ENCODE measurements at regions of chr20 and their contacts with region 1.

Region 1: DNA sequence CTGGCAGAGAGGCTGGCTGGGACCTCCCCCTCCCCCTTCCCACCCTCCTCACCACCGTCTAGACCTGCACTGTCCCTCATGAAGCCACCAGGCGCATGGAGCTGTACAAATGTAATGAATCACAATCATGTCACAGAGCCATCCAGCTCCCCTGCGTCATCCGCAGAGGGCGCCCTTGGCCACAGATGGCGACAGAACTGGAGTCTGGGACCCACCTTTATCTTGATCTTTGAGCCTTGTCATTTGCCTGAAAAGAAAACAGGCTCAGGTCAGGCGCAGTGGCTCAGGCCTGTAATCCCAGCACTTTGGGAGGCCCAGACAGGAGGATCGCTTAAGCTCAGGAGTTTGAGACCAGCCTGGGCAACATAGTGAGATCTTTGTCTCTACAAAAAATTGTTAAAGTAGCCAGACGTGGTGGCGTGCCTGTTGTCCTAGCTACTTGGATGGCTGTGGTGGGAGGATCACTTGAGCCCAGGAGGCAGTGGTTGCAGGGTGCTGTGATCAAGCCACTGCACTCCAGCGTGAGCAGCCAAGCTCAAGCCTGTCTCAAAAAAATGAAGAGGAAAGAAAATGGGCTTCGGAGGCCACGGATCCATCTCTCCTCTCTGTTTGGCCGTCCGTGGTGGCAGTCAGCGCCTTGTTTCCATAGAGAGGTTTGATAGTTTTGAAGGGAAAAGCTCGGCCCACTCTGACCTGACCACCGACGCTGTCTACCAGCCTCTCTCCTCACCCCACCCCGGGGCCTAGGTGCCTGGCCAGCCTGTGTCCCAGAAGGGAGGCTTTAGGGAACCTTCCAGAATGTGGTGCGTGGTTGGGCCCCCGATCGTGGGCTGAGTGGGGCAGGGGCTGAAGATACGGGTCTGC is 6.2 kb downstream of the COL9A3 start:
- DNase-seq: peak; percentile 87
- H3K4me3 ChIP-seq: no peak overlapping the region
- H3K27ac ChIP-seq: no peak overlapping the region
- H3K4me1 ChIP-seq: peaks cover 7% of the 10 kb centered on the region
- CTCF ChIP-seq: peak; percentile 88

Region 2: DNA sequence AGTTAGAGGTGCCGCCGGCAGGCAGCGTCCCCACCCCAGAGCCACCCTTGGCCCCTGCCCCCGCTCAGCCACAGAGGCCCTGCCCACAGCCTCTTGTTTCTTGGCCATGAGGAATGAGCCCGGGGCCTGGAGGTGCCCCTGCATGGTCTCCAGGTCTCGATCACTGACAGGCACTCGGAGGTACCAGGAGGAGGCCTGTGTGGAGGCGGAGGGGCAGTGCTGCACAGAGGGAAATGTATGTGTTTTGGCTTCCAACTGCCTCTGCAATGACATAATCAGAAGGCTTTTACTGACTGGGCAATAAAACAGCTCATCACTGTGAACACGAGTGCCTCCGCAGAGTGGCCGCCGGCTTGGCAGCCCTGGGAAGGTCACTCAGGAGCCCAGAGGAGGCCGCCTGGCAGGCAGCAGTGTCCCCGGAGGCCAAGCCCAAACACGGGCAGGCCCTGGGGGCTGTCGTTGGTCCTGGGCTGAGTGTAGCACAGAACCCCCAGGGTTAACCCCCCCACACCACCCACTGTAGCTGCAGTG is 286.1 kb before region 1 on chr20:
- CTCF ChIA-PET with region 1: no interaction called
- POLR2A ChIA-PET with region 1: no interaction called
- intact Hi-C with region 1: no loop called
- DNase-seq: no peak
- H3K4me3 ChIP-seq: no peak overlapping the region
- H3K27ac ChIP-seq: no peak overlapping the region
- H3K4me1 ChIP-seq: no peaks in the 10 kb centered on the region
- CTCF ChIP-seq: no peak

Region 3: GRCh38 chr20:62846188-62846890 is 23.3 kb after region 1 on chr20:
- CTCF ChIA-PET with region 1: interaction called, 9 read pairs
- POLR2A ChIA-PET with region 1: no interaction called
- intact Hi-C with region 1: loop called (anchors 1 kb)
- DNase-seq: no peak
- H3K4me3 ChIP-seq: no peak overlapping the region
- H3K27ac ChIP-seq: no peak overlapping the region
- H3K4me1 ChIP-seq: peaks cover 9% of the 10 kb centered on the region
- CTCF ChIP-seq: no peak

Measured in OCI-LY7 (cell line).